Heart right ventricle (tissue), 16 donors: ENCODE measurements at regions of chr4 and their contacts with region 1.

Region 1: GRCh38 chr4:169010125-169011023 is at the start of gene CBR4:
- DNase-seq: peak; percentile 97
- ATAC-seq: peak; percentile 98 to 99 (median 99)
- H3K4me3 ChIP-seq: peak within 1 kb of the TSS; percentile 63 to 84 (median 68)
- H3K27ac ChIP-seq: peak within 1 kb of the TSS; percentile 74 to 98 (median 94)
- H3K4me1 ChIP-seq: peaks cover 4 to 51% (median 38%) of the 10 kb centered on the region in 9 donors
- H3K27me3 ChIP-seq: no peaks in the 10 kb centered on the region
- CTCF ChIP-seq: peak in 8 of 9 donors; percentile 11 to 46 (median 37)
- total RNA-seq, gene CBR4: 14.0 to 25.3 (median 22.4) TPM

Region 2: GRCh38 chr4:168710353-168710946 is 299.9 kb before region 1 on chr4:
- intact Hi-C with region 1: loop called in 1 of 10 experiments (anchors 10 kb)
- DNase-seq: peak in 1 of 2 donors; percentile 36
- ATAC-seq: peak in 7 of 8 donors; percentile 49 to 78 (median 65)
- H3K4me3 ChIP-seq: no peak overlapping the region
- H3K27ac ChIP-seq: peak overlapping the region in 6 of 10 donors; percentile 44 to 77 (median 62)
- H3K4me1 ChIP-seq: peaks cover 8 to 30% (median 22%) of the 10 kb centered on the region in 9 donors
- H3K27me3 ChIP-seq: no peaks in the 10 kb centered on the region
- CTCF ChIP-seq: peak; percentile 30 to 76 (median 61)

Region 3: GRCh38 chr4:169059306-169060211 is 49.2 kb after region 1 on chr4:
- intact Hi-C with region 1: loop called in 1 of 10 experiments (anchors 2 kb)
- DNase-seq: peak; percentile 20 to 75
- ATAC-seq: peak; percentile 75 to 92 (median 83)
- H3K4me3 ChIP-seq: peak overlapping the region in 4 of 10 donors; percentile 3 to 26 (median 10)
- H3K27ac ChIP-seq: peak overlapping the region; percentile 77 to 91 (median 86)
- H3K4me1 ChIP-seq: peaks cover 18 to 57% (median 45%) of the 10 kb centered on the region in 9 donors
- H3K27me3 ChIP-seq: no peaks in the 10 kb centered on the region
- CTCF ChIP-seq: no peak

Region 4: DNA sequence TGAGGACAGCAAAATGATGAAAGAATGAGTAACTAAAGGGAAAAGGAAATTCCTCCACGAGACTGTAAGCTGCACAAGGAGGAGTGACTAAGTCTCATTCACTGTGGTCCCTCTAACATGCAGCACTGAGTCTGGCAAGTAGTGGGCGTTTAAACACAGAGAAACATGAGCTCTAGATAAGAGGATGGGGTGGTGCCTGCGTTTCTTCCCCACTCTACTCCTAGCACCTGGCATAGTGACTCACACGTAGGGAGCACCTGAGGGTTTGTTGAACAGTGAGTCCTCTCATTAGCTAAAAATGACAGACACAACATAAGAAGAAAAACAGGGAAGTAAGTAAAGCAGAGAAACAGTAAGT is 105.5 kb after region 1 on chr4:
- intact Hi-C with region 1: no loop called
- DNase-seq: no peak
- ATAC-seq: peak in 1 of 8 donors; percentile 22
- H3K4me3 ChIP-seq: no peak overlapping the region
- H3K27ac ChIP-seq: no peak overlapping the region
- H3K4me1 ChIP-seq: peaks cover 0 to 8% (median 0%) of the 10 kb centered on the region in 9 donors
- H3K27me3 ChIP-seq: no peaks in the 10 kb centered on the region
- CTCF ChIP-seq: no peak

Region 5: GRCh38 chr4:169293343-169294176 is 283.2 kb after region 1 on chr4:
- intact Hi-C with region 1: no loop called
- DNase-seq: no peak
- ATAC-seq: peak in 1 of 8 donors; percentile 16
- H3K4me3 ChIP-seq: no peak overlapping the region
- H3K27ac ChIP-seq: no peak overlapping the region
- H3K4me1 ChIP-seq: peaks cover 0 to 20% (median 0%) of the 10 kb centered on the region in 9 donors
- H3K27me3 ChIP-seq: no peaks in the 10 kb centered on the region
- CTCF ChIP-seq: no peak

Region 6: GRCh38 chr4:169566021-169566818 is 555.8 kb after region 1 on chr4:
- intact Hi-C with region 1: loop called in 1 of 10 experiments (anchors 10 kb)
- DNase-seq: peak in 1 of 2 donors; percentile 62
- ATAC-seq: peak in 7 of 8 donors; percentile 68 to 87 (median 81)
- H3K4me3 ChIP-seq: peak overlapping the region in 1 of 10 donors; percentile 18
- H3K27ac ChIP-seq: peak overlapping the region in 1 of 10 donors; percentile 18
- H3K4me1 ChIP-seq: peaks cover 0 to 17% (median 11%) of the 10 kb centered on the region in 9 donors
- H3K27me3 ChIP-seq: no peaks in the 10 kb centered on the region
- CTCF ChIP-seq: peak; percentile 43 to 86 (median 75)